HepG2 (cell line): ENCODE measurements at regions of chr19 and their contacts with region 1.

Region 1: DNA sequence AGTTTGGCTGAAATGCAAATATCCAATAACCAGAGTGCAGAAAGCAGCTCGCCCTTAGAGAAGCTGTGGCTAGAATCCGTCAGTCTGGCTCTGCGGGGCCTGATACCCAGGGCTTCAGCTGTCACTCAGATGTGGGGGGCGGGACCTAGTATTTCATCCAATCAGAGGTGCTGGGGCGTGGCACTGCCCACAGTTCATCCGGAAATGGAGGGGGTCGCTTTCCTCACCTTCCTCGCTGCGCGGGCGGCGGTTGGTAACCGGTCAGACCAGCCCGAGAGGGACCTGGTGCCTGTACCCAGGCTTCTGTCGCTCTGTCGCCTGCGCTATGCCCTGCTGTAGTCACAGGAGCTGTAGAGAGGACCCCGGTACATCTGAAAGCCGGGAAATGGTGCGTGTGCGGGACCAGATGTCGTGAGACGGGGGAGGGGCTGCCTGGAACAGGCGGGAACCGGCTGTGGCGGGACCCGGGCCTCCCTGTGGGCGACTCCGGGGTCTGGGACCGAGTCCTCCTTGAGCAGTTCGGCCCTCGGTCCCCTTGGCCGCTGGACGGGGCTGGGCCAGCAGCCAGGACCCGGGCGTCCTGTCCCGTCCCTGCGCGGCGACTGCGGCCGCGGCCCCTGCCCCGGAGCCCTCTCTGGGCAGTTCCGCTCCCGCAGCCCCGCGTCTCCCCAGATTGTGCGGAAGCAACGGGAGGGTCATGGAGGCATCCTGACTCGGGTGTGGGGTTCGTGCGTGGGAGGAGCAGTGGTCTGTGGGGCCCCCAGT is at the start of gene ZNF700:
- DNase-seq: peak; percentile 93
- ATAC-seq: peak; percentile 90
- H3K4me3 ChIP-seq: peak within 1 kb of the TSS; percentile 80 to 88 (median 85)
- H3K27ac ChIP-seq: peak within 1 kb of the TSS; percentile 97
- H3K4me1 ChIP-seq: peaks cover 51% of the 10 kb centered on the region
- H3K27me3 ChIP-seq: no peaks in the 10 kb centered on the region; a peak in 1 of 5 replicates
- CTCF ChIP-seq: no peak
- EP300 ChIP-seq: no peak
- POLR2A ChIP-seq: peak; percentile 84 to 97
- RAD21 ChIP-seq: peak; percentile 35
- total RNA-seq, gene ZNF700: 12.8 and 16.5 TPM in 2 replicates

Region 2: DNA sequence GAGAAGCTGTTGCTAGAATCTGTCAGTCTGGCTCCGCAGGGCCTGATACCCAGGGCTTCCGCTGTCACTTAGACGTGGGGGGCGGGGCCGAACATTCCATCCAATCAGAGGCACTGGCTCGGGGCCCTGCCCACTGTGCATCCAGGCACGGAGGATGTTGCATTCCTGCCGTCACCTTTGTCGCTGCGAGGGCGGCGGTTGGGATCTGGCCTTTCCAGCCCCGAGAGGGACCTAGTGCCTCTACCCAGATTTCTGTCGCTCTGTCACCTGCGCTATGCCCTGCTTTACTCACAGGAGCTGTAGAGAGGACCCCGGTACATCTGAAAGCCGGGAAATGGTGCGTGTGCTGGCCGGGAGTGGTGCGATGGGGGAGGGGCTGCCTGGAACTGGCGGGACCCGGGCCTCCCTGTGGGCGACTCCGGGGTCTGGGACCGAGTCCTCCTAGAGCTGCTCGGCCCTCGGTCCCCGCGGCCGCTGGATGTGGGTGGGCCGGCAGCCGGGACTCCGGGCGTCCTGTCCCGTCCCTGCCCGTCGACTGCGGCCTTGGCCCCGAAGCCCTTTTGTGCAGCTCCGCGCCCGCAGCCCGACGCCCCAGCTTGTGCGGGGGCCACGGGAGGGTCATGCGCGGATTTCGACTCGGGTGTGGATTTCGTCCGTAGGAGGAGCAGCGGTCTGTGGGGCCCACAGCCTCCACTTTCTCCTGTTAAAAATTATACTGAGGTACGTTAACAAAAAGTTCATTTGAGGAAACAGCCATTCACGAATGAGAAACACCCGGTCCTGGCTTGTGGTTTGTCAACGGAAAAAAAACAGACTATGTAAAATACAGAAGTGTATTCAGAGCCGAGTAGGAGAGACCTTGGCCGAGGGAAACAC is 76.2 kb before region 1 on chr19 and contains the start of gene ZNF439:
- CTCF ChIA-PET with region 1: no interaction called
- POLR2A ChIA-PET with region 1: no interaction called
- in situ Hi-C with region 1: no loop called
- intact Hi-C with region 1: no loop called
- DNase-seq: peak; percentile 85
- ATAC-seq: peak; percentile 97
- H3K4me3 ChIP-seq: peak within 1 kb of the TSS; percentile 64 to 82 (median 75)
- H3K27ac ChIP-seq: no peak within 1 kb of the TSS
- H3K4me1 ChIP-seq: peaks cover 28% of the 10 kb centered on the region
- H3K27me3 ChIP-seq: no peaks in the 10 kb centered on the region; a peak in 1 of 5 replicates
- CTCF ChIP-seq: no peak
- EP300 ChIP-seq: no peak
- POLR2A ChIP-seq: peak; percentile 35 to 67; a peak in 3 of 4 replicates
- RAD21 ChIP-seq: no peak
- total RNA-seq, gene ZNF439: 3.9 and 4.9 TPM in 2 replicates

Region 3: GRCh38 chr19:11887611-11888531 is 37.2 kb before region 1 on chr19 and contains the start of gene ZNF69:
- CTCF ChIA-PET with region 1: no interaction called
- POLR2A ChIA-PET with region 1: interaction called, 30 read pairs
- in situ Hi-C with region 1: no loop called
- intact Hi-C with region 1: loop called (anchors 5 kb)
- DNase-seq: peak; percentile 92
- ATAC-seq: peak; percentile 96
- H3K4me3 ChIP-seq: peak within 1 kb of the TSS; percentile 62 to 80 (median 77)
- H3K27ac ChIP-seq: peak within 1 kb of the TSS; percentile 94
- H3K4me1 ChIP-seq: peaks cover 47% of the 10 kb centered on the region
- H3K27me3 ChIP-seq: no peaks in the 10 kb centered on the region; a peak in 1 of 5 replicates
- CTCF ChIP-seq: peak; percentile 42; the same call in 1 of the 2 replicates
- EP300 ChIP-seq: peak in 1 of 2 experiments; percentile 43; a peak in 2 of 4 replicates
- POLR2A ChIP-seq: peak; percentile 87 to 88
- RAD21 ChIP-seq: peak; percentile 46
- total RNA-seq, gene ZNF69: 21.0 and 35.5 TPM in 2 replicates

Region 4: GRCh38 chr19:11964858-11965645 is 40.0 kb after region 1 on chr19 and contains the start of gene ZNF763:
- CTCF ChIA-PET with region 1: interaction called, 3 read pairs
- POLR2A ChIA-PET with region 1: interaction called, 10 read pairs
- in situ Hi-C with region 1: no loop called
- intact Hi-C with region 1: no loop called
- DNase-seq: peak; percentile 60
- ATAC-seq: peak; percentile 88
- H3K4me3 ChIP-seq: peak within 1 kb of the TSS in 2 of 3 experiments; percentile 31 to 42; a peak in 3 of 6 replicates
- H3K27ac ChIP-seq: no peak within 1 kb of the TSS
- H3K4me1 ChIP-seq: peaks cover 18% of the 10 kb centered on the region
- H3K27me3 ChIP-seq: no peaks in the 10 kb centered on the region
- CTCF ChIP-seq: no peak
- EP300 ChIP-seq: no peak
- POLR2A ChIP-seq: no peak
- RAD21 ChIP-seq: no peak
- total RNA-seq, gene ZNF763: 0.42 and 0.49 TPM in 2 replicates